ENCODE measurements at regions of chr10 and their contacts with region 1.

Region 1: GRCh38 chr10:3785257-3785850 is 345 bp upstream of the KLF6 start:
- DNase-seq: peak; percentile 99
- ATAC-seq: peak; percentile 73
- H3K4me3 Mint-ChIP-seq: peak overlapping the region; percentile 93
- H3K27ac Mint-ChIP-seq: peak overlapping the region; percentile 99
- H3K4me1 Mint-ChIP-seq: peaks cover 23% of the 10 kb centered on the region
- H3K27me3 Mint-ChIP-seq: no peaks in the 10 kb centered on the region

Region 2: DNA sequence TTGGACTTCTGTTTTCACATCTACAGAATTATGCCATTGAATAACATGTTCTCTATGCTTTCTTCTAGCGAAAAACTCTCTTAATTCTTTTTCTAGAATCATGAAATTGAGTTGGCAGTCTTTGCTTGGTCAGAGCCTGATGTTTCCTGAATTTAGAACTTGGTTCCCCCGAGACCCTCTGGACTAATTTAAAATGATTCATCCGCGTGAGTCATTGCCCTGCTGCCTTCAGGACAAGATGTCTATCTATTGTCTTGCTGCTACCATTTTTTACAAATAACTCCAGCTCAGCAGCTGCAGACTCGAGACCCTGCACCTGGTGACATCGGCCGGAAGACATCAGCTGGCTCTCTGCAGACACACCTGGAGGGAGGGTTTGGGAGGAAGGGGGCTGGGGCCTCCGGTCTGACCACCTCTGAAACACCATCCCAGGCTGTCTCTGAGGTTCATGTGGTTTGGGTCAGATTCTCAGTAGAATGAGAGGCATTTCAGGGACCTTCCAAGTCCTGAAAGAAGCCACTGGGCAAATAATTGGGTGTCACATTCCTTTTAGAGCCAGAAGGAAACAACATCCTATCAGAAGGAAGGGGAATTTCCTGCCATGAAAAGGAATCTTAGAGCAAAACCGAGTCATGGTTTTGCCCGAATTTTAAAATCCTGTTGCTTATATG is 20.6 kb after region 1 on chr10:
- CTCF ChIA-PET with region 1: interaction called, 57 read pairs
- DNase-seq: peak; percentile 80
- ATAC-seq: peak; percentile 2
- H3K4me3 Mint-ChIP-seq: peak overlapping the region; percentile 58
- H3K27ac Mint-ChIP-seq: no peak overlapping the region
- H3K4me1 Mint-ChIP-seq: peaks cover 72% of the 10 kb centered on the region
- H3K27me3 Mint-ChIP-seq: no peaks in the 10 kb centered on the region

Region 3: GRCh38 chr10:3811291-3811870 is 26.0 kb after region 1 on chr10:
- CTCF ChIA-PET with region 1: interaction called, 57 read pairs
- DNase-seq: peak; percentile 82
- ATAC-seq: peak; percentile 56
- H3K4me3 Mint-ChIP-seq: peak overlapping the region; percentile 69
- H3K27ac Mint-ChIP-seq: no peak overlapping the region
- H3K4me1 Mint-ChIP-seq: peaks cover 76% of the 10 kb centered on the region
- H3K27me3 Mint-ChIP-seq: no peaks in the 10 kb centered on the region

Measured in activated CD8-positive, alpha-beta memory T cell treated with anti-CD3 and anti-CD28 coated beads, Interleukin-2, amount 10 ng/mL, durations not matched to agents 7 days and 5 days (primary cell).